Mucosa of descending colon (tissue), 3 donors: ENCODE measurements at regions of chr20 and their contacts with region 1.

Region 1: DNA sequence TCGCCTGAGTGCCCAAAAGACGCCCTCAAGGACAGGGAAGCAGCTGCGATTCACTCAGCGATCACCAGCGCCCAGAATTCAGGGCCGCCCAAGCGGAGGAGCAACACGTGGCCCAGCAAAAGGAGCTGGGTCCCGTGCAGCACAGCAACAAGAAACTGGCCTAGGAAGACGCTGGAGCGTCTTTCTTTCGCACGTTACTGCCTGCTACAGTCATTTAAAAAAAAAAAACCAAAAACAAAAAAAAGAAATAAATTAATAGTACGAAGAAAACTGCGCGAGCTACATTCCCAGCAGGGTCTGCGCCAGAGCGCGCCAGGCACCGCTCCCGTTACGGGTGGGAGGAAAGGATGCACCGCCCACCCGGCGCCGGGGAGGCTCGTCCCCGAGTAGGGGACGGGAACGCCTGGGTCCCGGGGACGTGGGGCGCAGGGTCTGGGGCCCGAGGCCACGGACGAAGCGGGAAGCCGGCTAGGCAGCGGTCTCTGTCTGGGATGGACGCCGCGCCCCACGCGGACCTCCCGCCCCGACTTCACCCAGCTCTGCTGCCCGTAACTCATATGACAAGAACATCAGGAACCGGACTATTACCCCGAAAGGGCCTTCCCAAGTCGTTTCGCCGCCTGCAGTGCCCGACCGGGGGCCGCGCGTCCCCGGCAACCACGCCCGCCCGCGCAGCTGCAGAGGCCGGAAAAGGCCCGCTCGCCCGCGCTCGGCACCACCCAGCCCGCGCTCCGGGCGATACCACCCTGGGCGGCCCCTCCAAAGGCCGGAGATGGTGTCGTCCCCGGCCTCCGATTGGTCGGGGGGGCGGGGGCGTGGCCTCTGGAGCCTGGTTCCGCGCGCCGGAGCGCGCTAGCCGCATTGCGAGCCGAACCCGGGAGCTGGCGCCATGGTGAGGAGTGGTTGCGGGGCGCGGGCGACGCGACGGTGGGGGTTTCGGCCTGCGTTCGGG is at the start of gene NOP56:
- DNase-seq: peak; percentile 93 to 98 (median 95)
- ATAC-seq: peak; percentile 98
- H3K4me3 ChIP-seq: peak within 1 kb of the TSS; percentile 81
- H3K4me1 ChIP-seq: peaks cover 11% of the 10 kb centered on the region
- CTCF ChIP-seq: no peak
- total RNA-seq, gene NOP56: 80.8 to 116 (median 107) TPM

Region 2: DNA sequence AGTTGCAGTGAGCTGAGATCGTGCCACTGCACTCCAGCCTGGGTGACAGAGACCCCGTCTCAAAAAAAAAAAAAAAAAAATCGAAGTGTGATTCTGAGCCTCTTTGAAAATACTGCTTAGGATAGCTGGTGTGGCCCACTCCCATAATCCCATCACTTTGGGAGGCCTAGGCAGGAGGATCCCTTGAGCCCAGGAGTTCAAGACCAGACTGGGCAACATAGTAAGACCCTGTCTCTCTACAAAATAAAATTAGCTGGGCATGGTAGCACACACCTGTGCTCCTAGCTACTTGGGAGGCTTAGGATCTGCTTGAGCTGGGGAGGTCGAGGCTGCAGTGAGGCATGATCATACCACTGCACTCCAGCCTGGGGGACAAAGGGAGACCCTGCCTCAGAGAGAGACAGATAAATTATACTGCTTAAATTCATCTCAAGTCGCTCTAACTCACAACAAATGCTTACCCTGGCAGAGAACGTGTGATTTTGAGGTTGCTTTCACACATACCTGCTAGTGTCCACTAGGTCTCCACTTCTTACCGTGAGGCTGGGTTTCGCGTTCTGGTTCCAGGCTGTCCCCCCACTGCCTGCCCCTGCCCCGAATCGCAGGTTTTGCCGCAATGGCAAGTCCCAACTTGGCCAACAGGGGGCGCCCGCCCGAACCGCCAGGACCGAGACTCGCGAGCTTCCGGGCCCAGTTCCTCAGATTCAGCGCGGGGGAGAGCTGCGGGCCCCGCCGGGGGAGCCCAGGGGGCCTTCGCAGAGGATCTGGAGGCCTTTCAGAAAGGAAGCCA is 127.9 kb before region 1 on chr20:
- intact Hi-C with region 1: loop called in 1 of 2 experiments (anchors 5 kb)
- DNase-seq: peak; percentile 92 to 93 (median 92)
- ATAC-seq: peak; percentile 93
- H3K4me3 ChIP-seq: peak overlapping the region; percentile 70
- H3K4me1 ChIP-seq: peaks cover 4% of the 10 kb centered on the region
- CTCF ChIP-seq: peak; percentile 98

Region 3: GRCh38 chr20:3156811-3157619 is 505.0 kb after region 1 on chr20:
- intact Hi-C with region 1: no loop called
- DNase-seq: no peak
- ATAC-seq: no peak
- H3K4me3 ChIP-seq: no peak overlapping the region
- H3K4me1 ChIP-seq: peaks cover 22% of the 10 kb centered on the region
- CTCF ChIP-seq: no peak